Activated T-helper 1 cell treated with anti-CD3 and anti-CD28 coated beads, Interleukin-12 subunit alpha, Interleukin-12 subunit beta, Interleukin-2, Interleukin-4 antibody, amounts not matched to agents 30 ng/mL and 10 ng/mL and 1 ng/mL, durations not matched to agents 14 hours and 24 hours and 36 hours (primary cell): ENCODE measurements at regions of chr11 and their contacts with region 1.

Region 1: DNA sequence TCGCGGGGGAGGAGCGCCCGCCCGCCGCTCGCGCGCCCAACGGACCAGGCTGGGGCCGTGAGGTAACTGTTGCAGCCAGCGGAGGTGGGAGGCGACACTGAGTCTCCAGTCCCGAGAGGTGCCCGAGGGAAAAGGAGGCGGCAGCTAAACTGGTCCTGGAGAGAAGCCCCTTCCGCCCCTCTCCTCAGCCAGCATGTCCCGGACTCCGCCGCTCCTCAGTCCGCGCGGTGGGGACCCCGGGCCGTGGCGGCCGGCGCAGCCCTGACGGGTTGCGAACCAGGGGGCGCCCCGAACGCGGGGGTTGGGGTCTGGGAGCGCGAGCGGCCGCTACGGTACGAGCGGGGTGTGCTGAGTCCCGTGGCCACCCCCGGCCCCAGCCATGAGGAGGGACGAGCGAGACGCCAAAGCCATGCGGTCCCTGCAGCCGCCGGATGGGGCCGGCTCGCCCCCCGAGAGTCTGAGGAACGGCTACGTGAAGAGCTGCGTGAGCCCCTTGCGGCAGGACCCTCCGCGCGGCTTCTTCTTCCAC is at the start of gene PDE3B:
- DNase-seq: peak; percentile 69
- H3K4me3 Mint-ChIP-seq: peak within 1 kb of the TSS; percentile 91
- H3K27ac Mint-ChIP-seq: peak within 1 kb of the TSS; percentile 92
- H3K4me1 Mint-ChIP-seq: peaks cover 52% of the 10 kb centered on the region
- H3K27me3 Mint-ChIP-seq: no peaks in the 10 kb centered on the region
- total RNA-seq, gene PDE3B: 62.8 and 64.0 TPM in 2 replicates

Region 2: GRCh38 chr11:13210424-13210823 is 1433.3 kb before region 1 on chr11:
- intact Hi-C with region 1: loop called (anchors 5 kb)
- DNase-seq: no peak
- H3K4me3 Mint-ChIP-seq: no peak overlapping the region
- H3K27ac Mint-ChIP-seq: no peak overlapping the region
- H3K4me1 Mint-ChIP-seq: peaks cover 25% of the 10 kb centered on the region
- H3K27me3 Mint-ChIP-seq: no peaks in the 10 kb centered on the region

Region 3: DNA sequence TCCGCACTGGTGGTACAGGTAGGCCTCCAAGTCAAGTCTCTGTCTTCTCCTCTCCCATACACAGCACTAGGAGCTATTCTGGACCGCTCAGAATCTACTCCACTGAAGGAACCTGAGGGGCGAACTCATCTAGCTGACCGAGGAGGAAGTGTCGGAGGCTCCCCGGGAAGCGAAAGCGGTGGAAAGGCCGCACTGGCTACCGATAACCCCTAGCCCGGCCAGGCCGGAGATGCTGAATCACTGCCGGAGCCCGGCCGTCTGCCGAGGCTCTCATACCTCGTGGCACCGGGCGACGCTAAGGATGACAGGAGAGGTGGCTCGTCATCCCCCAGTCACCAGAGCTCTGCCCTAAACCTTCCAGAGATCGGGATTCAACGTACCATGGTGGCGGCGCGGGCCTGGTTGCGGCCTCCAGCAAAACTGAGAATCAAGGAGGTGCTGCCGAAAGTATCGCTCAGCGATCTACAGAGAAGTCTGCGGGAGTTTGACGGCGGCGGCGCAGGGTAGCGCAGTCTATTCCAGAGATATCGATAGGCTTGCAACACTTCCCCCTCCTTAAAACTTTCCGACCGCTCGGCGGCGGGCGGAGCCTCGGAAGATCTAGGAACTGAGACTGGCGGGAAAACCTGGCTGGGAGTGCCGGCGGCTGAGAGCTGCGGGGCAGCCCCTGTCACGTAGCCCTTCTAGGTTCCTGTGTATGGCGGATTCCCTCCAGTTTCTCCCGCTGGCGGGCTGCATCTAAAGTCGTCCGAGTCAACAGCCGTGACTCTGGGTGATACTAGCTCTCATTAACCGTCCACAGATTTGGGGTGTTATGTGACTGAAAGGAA is 123.6 kb before region 1 on chr11 and contains the start of gene PSMA1:
- intact Hi-C with region 1: loop called (anchors 1 kb)
- DNase-seq: peak; percentile 92
- H3K4me3 Mint-ChIP-seq: peak within 1 kb of the TSS; percentile 94
- H3K27ac Mint-ChIP-seq: peak within 1 kb of the TSS; percentile 94
- H3K4me1 Mint-ChIP-seq: peaks cover 33% of the 10 kb centered on the region
- H3K27me3 Mint-ChIP-seq: no peaks in the 10 kb centered on the region
- total RNA-seq, gene PSMA1: 313 and 340 TPM in 2 replicates

Region 4: GRCh38 chr11:14549891-14550290 is 93.9 kb before region 1 on chr11:
- intact Hi-C with region 1: no loop called
- DNase-seq: no peak
- H3K4me3 Mint-ChIP-seq: no peak overlapping the region
- H3K27ac Mint-ChIP-seq: no peak overlapping the region
- H3K4me1 Mint-ChIP-seq: peaks cover 59% of the 10 kb centered on the region
- H3K27me3 Mint-ChIP-seq: no peaks in the 10 kb centered on the region

Region 5: GRCh38 chr11:14578541-14578956 is 65.2 kb before region 1 on chr11:
- intact Hi-C with region 1: loop called (anchors 1 kb)
- DNase-seq: peak; percentile 76
- H3K4me3 Mint-ChIP-seq: peak overlapping the region; percentile 21
- H3K27ac Mint-ChIP-seq: peak overlapping the region; percentile 84
- H3K4me1 Mint-ChIP-seq: peaks cover 71% of the 10 kb centered on the region
- H3K27me3 Mint-ChIP-seq: no peaks in the 10 kb centered on the region

Region 6: DNA sequence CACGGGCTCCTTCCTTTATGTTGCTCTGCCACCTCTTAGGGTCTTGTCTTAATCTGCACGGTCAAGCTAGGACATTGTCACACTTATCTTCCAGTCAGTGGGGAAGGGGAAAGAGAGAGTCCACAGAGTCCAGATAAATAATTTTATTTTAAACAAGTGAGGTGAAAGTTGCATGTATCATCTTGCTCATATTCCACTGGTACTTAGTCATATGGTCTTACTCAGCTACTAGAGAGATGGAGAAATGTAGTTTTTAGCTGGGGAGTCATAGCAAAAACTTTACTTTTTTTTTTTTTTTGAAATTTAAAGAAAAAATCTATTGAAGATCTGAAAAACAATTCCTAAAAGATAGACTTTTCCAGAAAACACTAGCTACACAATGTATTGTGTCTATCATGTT is 28.9 kb after region 1 on chr11:
- intact Hi-C with region 1: loop called (anchors 2 kb)
- DNase-seq: no peak
- H3K4me3 Mint-ChIP-seq: no peak overlapping the region
- H3K27ac Mint-ChIP-seq: peak overlapping the region; percentile 77
- H3K4me1 Mint-ChIP-seq: peaks cover 63% of the 10 kb centered on the region
- H3K27me3 Mint-ChIP-seq: no peaks in the 10 kb centered on the region

Region 7: GRCh38 chr11:14907411-14908213 is 263.9 kb after region 1 on chr11:
- intact Hi-C with region 1: loop called (anchors 1 kb)
- DNase-seq: peak; percentile 76
- H3K4me3 Mint-ChIP-seq: peak overlapping the region; percentile 23
- H3K27ac Mint-ChIP-seq: no peak overlapping the region
- H3K4me1 Mint-ChIP-seq: peaks cover 63% of the 10 kb centered on the region
- H3K27me3 Mint-ChIP-seq: no peaks in the 10 kb centered on the region